Uterus (tissue), 4 donors: ENCODE measurements at regions of chr3 and their contacts with region 1.

Region 1: GRCh38 chr3:138594150-138594934 is at the start of gene CEP70:
- DNase-seq: peak; percentile 96
- H3K4me3 ChIP-seq: peak within 1 kb of the TSS; percentile 68 to 83
- H3K27ac ChIP-seq: peak within 1 kb of the TSS; percentile 89 to 95
- H3K4me1 ChIP-seq: peaks cover 0 to 5% of the 10 kb centered on the region in 2 donors
- H3K27me3 ChIP-seq: no peaks in the 10 kb centered on the region
- CTCF ChIP-seq: peak; percentile 85 to 93 (median 90)
- POLR2A ChIP-seq: peak; percentile 95 to 96
- total RNA-seq, gene CEP70: 90.6 to 154 (median 123) TPM

Region 2: DNA sequence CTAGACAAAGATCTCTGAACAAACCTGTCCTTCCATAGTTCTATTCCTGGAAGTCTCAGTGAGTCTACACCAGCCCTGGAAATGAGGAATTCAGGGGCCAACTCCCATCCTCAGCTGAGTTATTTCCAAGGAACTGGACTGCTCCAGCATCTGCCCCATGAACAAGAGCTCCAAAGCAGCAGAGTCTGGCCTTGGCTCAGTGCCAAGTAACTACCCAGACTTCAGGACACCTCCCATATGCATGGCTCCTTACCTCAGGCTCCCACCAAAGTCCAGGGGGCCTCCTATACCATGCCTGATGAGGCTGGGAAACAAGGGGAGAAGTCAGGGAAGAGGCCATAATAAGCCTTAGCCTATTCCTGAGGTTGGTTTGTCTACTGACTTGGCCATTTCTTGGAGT is 59.2 kb after region 1 on chr3:
- intact Hi-C with region 1: no loop called
- DNase-seq: no peak
- H3K4me3 ChIP-seq: no peak overlapping the region
- H3K27ac ChIP-seq: no peak overlapping the region
- H3K4me1 ChIP-seq: no peaks in the 10 kb centered on the region
- H3K27me3 ChIP-seq: no peaks in the 10 kb centered on the region
- CTCF ChIP-seq: no peak
- POLR2A ChIP-seq: no peak

Region 3: GRCh38 chr3:138915503-138916498 is 321.5 kb after region 1 on chr3:
- intact Hi-C with region 1: loop called (anchors 5 kb)
- DNase-seq: peak; percentile 94
- H3K4me3 ChIP-seq: peak overlapping the region; percentile 59 to 72
- H3K27ac ChIP-seq: peak overlapping the region; percentile 89 to 96
- H3K4me1 ChIP-seq: no peaks in the 10 kb centered on the region
- H3K27me3 ChIP-seq: no peaks in the 10 kb centered on the region
- CTCF ChIP-seq: peak; percentile 80 to 98 (median 90)
- POLR2A ChIP-seq: peak in 1 of 2 donors; percentile 23

Region 4: DNA sequence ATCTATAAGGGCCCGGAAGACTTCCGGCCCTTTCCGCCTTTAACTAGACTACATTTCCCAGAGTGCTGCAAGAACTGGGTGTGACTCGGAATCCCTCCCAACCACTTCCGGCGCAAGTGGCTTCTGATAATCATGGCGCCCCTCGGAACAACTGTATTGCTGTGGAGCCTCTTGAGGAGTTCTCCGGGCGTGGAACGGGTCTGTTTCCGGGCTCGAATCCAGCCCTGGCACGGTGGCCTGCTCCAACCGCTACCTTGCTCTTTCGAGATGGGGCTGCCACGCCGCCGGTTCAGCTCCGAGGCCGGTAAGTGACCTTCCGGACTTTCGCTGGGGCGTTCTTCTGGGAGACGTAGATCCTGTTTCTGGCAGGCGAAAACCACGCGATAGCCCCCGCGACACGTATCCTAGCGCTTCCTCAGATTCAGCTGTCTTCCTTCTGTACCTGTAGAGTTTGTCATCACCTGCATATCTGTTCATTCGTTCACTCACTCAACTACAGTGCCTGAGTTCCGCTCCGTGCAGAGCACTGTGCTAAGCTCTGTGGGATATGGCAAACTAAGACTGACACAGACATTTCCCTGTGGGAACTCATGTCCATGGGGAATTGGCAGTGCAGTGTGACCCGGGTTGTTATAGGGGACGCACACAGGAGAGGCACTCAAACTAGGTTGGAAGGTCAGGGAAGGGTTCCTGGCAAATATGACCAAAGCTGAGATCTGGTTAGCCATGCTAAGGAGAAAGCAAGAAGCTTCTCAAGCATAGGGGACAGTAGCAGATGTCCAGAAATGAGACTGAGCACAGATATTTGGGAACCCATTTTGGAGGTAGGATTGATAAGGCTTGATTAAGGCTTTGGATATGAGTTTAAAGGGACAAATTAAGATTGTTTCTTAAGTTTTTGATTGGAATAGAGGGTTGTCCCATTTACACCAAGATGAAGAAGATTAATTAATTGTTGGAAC is 749.8 kb after region 1 on chr3 and contains the start of gene MRPS22:
- intact Hi-C with region 1: loop called (anchors 10 kb)
- DNase-seq: peak; percentile 75 to 78
- H3K4me3 ChIP-seq: peak within 1 kb of the TSS; percentile 73 to 77
- H3K27ac ChIP-seq: peak within 1 kb of the TSS; percentile 64 to 76
- H3K4me1 ChIP-seq: peaks cover 0 to 7% of the 10 kb centered on the region in 2 donors
- H3K27me3 ChIP-seq: no peaks in the 10 kb centered on the region
- CTCF ChIP-seq: no peak
- POLR2A ChIP-seq: peak; percentile 16 to 31
- total RNA-seq, gene MRPS22: 47.8 to 118 (median 76.5) TPM